ENCODE measurements at regions of chr1 and their contacts with region 1.

Region 1: GRCh38 chr1:16613185-16614147 is at the start of gene NBPF1:
- DNase-seq: peak; percentile 100
- ATAC-seq: peak; percentile 96
- H3K4me3 Mint-ChIP-seq: no peak within 1 kb of the TSS
- H3K27ac Mint-ChIP-seq: no peak within 1 kb of the TSS
- H3K4me1 Mint-ChIP-seq: no peaks in the 10 kb centered on the region
- H3K27me3 Mint-ChIP-seq: no peaks in the 10 kb centered on the region
- CTCF ChIP-seq: no peak
- total RNA-seq, gene NBPF1: 17.5 to 18.3 TPM (median 17.9 TPM) in 3 replicates

Region 2: DNA sequence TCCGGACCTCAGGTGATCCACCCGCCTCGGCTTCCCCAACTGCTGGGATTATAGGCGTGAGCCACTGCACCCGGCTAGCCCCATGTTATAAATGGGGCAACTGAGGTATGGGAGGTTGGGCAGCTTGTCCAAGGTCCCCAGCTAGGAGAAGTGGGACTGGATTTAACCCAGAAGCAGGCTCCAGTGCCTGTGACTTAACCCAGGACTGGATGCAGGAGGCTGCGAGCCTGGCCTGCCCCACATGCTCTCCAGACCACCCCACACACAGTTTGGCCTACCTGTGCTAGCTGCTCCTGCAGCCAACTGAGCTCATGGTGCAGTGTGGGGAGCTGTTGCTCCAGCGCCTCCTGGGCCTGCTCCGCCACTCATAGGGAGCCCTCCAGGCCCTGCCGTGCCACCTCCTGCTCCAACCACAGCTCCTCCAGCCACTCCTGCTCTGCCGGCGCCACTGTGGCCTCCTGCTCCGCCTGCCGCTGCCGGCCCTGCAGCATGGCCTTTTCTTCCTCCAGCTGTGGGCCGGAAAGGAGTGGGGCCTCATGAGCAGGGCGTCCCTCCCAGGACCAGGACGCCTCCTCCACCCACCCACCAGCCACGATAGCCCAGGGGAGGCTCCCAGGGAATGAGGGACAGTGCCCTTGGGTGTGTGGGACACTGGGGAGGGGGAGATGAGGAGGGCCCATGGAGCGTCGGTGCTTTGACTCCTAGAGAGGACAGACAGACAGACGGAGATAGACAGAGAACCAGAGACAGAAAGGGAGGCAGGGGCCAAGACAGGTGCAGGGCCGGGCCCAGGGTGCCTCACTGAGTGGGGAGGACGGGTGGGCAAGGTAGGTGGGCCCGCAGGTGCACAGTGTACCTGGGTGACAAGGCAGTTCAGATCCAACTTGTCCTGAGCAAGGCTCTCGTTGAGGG is 12.3 kb after region 1 on chr1:
- CTCF ChIA-PET with region 1: interaction called, 56 read pairs
- POLR2A ChIA-PET with region 1: interaction called, 3 read pairs
- DNase-seq: no peak
- ATAC-seq: no peak
- H3K4me3 Mint-ChIP-seq: no peak overlapping the region
- H3K27ac Mint-ChIP-seq: 0 out of 2 replicates have a peak overlapping the region, but pooled peaks have one; percentile 12
- H3K4me1 Mint-ChIP-seq: no peaks in the 10 kb centered on the region
- H3K27me3 Mint-ChIP-seq: no peaks in the 10 kb centered on the region
- CTCF ChIP-seq: no peak

Measured in WTC11 (cell line).